ENCODE measurements at regions of chr18 and their contacts with region 1.

Region 1: GRCh38 chr18:73535189-73535588 is 612.4 kb downstream of the FBXO15 start:
- DNase-seq: no peak
- ATAC-seq: no peak
- H3K4me3 ChIP-seq: no peak overlapping the region
- H3K27ac ChIP-seq: no peak overlapping the region
- H3K4me1 ChIP-seq: no peaks in the 10 kb centered on the region
- H3K27me3 ChIP-seq: no peaks in the 10 kb centered on the region
- CTCF ChIP-seq: no peak

Region 2: GRCh38 chr18:73479477-73479876 is 55.7 kb before region 1 on chr18:
- intact Hi-C with region 1: no loop called
- DNase-seq: no peak
- ATAC-seq: no peak
- H3K4me3 ChIP-seq: no peak overlapping the region
- H3K27ac ChIP-seq: no peak overlapping the region
- H3K4me1 ChIP-seq: no peaks in the 10 kb centered on the region
- H3K27me3 ChIP-seq: no peaks in the 10 kb centered on the region
- CTCF ChIP-seq: no peak

Region 3: DNA sequence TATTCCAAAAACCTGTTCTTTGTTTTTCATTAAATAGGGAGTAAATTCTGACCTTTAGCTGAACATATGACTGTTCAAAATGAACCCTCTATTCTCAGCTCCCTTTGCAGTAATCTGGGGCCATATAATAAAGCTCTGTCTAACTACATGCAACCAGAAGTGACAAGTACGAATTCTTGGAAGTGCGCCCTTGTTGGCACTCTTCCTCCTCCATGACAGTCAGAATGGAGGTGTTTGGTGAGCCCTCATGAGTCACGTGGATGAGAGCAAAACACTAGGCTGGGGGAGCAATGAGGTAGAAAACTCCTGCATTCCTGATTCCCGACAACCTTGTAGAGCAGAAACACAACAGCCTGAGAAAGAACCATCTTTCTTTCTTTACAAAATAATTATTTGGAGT is 59.6 kb after region 1 on chr18:
- intact Hi-C with region 1: loop called in 1 of 10 experiments (anchors 5 kb)
- DNase-seq: peak; percentile 11 to 23
- ATAC-seq: peak in 3 of 8 donors; percentile 55 to 64 (median 59)
- H3K4me3 ChIP-seq: no peak overlapping the region
- H3K27ac ChIP-seq: no peak overlapping the region
- H3K4me1 ChIP-seq: no peaks in the 10 kb centered on the region
- H3K27me3 ChIP-seq: no peaks in the 10 kb centered on the region
- CTCF ChIP-seq: no peak

Measured in heart right ventricle (tissue), 16 donors.